Common myeloid progenitor, CD34-positive (primary cell): ENCODE measurements at regions of chr2 and their contacts with region 1.

Region 1: DNA sequence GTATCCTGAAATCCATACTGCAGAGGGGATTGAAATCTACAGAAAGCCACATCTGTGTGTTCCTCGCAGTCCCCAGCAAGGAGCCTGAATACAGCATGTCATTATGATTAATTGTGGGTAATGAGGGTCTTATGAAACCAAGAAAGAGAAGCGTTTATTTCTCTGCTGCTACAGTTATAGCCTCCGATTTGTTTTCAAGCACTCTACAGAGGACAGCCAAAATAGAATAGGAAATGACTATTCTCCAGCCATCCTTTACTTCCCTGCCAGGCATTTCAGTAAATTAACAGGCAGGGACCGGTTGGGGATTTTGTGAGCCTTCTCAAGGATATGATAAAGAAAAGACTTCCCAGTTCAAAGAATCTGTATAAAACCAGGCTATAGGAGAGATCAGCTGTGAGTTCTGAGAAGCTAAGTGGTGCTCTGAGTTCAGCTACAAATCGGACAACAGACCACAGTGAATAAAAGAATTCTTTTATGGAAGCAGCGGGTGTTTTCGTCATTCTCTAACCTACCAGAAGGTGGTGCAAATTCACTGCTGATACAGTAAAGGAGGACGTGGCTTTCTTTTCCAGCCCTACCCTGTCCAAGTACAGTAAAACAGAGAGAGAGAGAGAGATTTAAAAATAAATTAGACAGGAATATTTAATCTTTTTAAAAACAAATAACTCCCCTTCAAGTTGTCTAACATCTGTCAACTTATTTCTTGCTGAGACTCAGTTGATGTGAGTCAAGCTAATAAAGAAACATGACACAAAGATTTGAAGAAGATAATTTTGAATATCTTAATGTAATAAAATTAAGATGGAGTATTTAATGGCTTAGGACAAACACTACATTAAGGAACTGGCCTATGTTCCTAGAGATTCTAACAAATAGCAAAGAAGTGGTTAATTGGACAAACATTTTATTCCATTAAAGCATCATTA is 133.7 kb downstream of the INSIG2 start:
- DNase-seq: peak; percentile 81 to 84 (median 82)
- H3K4me3 ChIP-seq: no peak overlapping the region
- H3K27ac ChIP-seq: no peak overlapping the region
- H3K4me1 ChIP-seq: peaks cover 0 to 15% (median 12%) of the 10 kb centered on the region in 4 experiments
- H3K27me3 ChIP-seq: peaks cover 31 to 89% (median 45%) of the 10 kb centered on the region in 5 experiments

Region 2: GRCh38 chr2:118209727-118210126 is 12.2 kb before region 1 on chr2:
- CTCF ChIA-PET with region 1: interaction called, 11 read pairs
- POLR2A ChIA-PET with region 1: no interaction called
- DNase-seq: no peak
- H3K4me3 ChIP-seq: no peak overlapping the region
- H3K27ac ChIP-seq: no peak overlapping the region
- H3K4me1 ChIP-seq: no peaks in the 10 kb centered on the region
- H3K27me3 ChIP-seq: peaks cover 7 to 42% (median 24%) of the 10 kb centered on the region in 5 experiments

Region 3: GRCh38 chr2:118237451-118237850 is 15.5 kb after region 1 on chr2:
- CTCF ChIA-PET with region 1: no interaction called
- POLR2A ChIA-PET with region 1: no interaction called
- DNase-seq: no peak
- H3K4me3 ChIP-seq: no peak overlapping the region
- H3K27ac ChIP-seq: no peak overlapping the region
- H3K4me1 ChIP-seq: no peaks in the 10 kb centered on the region
- H3K27me3 ChIP-seq: peaks cover 2 to 44% (median 6%) of the 10 kb centered on the region in 5 experiments

Region 4: DNA sequence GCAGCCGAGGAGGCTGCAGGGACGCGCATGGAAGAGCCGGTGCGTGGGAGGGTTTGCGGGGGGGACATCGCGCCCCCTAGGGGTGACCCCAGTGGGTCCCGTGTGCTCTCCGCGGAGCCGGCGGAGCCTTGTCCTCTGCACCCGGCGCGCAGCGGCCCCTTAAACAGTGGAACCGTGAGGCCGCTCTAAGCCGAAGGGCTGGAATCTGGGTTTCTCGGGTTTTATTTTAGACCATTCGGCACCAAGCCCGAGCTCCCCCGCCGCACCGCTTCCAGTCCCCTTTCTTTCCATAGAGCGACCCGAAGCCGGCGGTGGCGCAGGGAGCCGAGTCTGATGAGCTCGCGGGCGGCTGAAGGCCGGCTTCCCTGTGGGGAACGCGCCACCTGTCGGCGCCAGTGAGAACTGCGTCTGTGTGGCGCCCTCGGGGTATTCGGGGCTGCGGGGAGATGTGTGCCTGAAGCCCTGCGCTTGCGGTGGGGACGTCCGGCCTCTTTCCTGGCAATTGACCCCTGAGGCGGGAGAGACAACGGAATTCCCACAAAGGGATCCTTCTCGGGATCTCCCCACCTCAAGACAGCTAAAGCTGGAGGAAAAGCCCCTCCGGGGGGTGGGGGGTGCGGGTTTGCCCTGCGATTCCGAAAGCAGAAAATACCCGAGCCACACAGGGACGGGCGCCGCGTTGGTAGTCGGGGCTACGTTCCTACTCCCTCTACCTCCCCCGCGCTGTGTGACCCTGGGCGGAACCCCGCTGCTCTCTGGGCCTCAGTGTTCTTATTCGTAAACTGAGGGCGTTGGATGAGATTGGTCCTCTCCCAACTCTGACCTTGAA is 633.7 kb after region 1 on chr2:
- CTCF ChIA-PET with region 1: interaction called, 71 read pairs
- POLR2A ChIA-PET with region 1: no interaction called
- DNase-seq: peak; percentile 78 to 89 (median 88)
- H3K4me3 ChIP-seq: peak overlapping the region in 5 of 7 experiments; percentile 11 to 71 (median 43)
- H3K27ac ChIP-seq: no peak overlapping the region
- H3K4me1 ChIP-seq: peaks cover 0 to 24% (median 10%) of the 10 kb centered on the region in 4 experiments
- H3K27me3 ChIP-seq: peaks cover 17 to 100% (median 84%) of the 10 kb centered on the region in 5 experiments